ENCODE measurements at regions of chrX and their contacts with region 1.

Region 1: DNA sequence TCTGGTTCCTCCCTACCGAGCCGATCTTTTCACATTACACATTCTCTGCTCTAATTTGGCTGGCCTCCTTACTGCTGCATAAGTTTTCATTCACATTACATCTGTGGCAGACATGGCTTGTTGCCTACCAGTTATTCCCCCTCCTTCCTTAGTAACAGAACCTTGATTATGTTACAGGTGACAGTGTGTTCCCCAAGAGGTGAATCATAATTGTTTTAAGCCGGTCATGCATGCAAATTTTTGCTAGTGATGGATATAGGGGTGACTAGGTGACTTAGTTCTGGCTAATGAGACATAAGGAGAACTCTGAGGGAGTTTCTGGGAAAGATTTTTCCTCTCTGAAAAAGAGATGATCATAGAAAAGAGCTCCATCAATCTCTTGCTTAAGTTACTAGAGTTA is 8.4 kb upstream of the LAMP2 start:
- DNase-seq: no peak
- ATAC-seq: no peak
- H3K4me3 ChIP-seq: no peak overlapping the region
- H3K27ac ChIP-seq: no peak overlapping the region
- H3K4me1 ChIP-seq: no peaks in the 10 kb centered on the region
- H3K27me3 ChIP-seq: no peaks in the 10 kb centered on the region
- CTCF ChIP-seq: no peak
- POLR2A ChIP-seq: no peak

Region 2: DNA sequence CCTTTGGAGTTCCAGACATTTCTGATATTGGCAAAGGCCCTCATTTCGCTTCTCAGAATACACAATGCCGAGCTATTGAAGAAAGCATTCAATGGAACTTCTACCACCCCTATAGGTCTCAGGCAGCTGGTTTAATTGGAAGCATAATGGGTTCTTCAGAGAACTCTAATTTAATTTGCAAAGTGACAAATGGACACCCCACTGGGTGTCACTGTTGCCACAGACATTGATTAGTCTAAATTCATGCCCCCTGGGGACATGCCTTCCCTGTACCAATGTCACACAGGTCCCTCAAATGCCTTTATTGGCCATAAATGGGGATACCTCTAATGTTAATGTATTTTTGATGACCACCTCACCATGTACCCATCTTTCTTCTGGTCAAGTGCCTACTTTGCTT is 143.3 kb before region 1 on chrX:
- in situ Hi-C with region 1: loop called in 3 of 4 experiments (anchors 10 kb)
- intact Hi-C with region 1: loop called (anchors 2 kb)
- DNase-seq: no peak
- ATAC-seq: peak in 1 of 2 donors; percentile 49
- H3K4me3 ChIP-seq: no peak overlapping the region
- H3K27ac ChIP-seq: no peak overlapping the region
- H3K4me1 ChIP-seq: no peaks in the 10 kb centered on the region
- H3K27me3 ChIP-seq: peaks cover 0 to 4% (median 0%) of the 10 kb centered on the region in 3 donors
- CTCF ChIP-seq: peak in 1 of 5 experiments; percentile 43
- POLR2A ChIP-seq: no peak

Region 3: DNA sequence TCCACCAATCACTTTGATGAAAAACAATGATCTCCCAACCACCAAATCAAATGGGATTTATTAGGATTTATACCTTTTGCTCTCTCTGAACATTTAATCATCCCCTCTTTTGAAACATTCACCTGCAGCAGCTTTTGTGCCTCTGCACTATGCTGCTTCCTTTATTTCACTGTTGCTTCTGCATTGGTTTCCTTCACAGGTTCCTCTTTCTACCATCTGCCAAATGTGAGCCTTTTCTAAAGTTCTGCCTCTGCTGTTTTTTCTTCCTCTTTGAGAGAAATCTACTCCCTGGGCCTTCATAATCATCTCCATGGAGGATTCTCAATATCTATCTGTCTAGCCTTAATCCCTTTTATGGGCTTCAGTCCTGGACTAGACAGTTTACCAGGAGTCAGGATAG is 58.6 kb after region 1 on chrX:
- in situ Hi-C with region 1: no loop called
- intact Hi-C with region 1: no loop called
- DNase-seq: no peak
- ATAC-seq: no peak
- H3K4me3 ChIP-seq: no peak overlapping the region
- H3K27ac ChIP-seq: no peak overlapping the region
- H3K4me1 ChIP-seq: no peaks in the 10 kb centered on the region
- H3K27me3 ChIP-seq: no peaks in the 10 kb centered on the region
- CTCF ChIP-seq: no peak
- POLR2A ChIP-seq: no peak

Measured in gastrocnemius medialis (tissue), 4 donors.